CD8-positive, alpha-beta memory T cell (primary cell): ENCODE measurements at regions of chr2 and their contacts with region 1.

Region 1: DNA sequence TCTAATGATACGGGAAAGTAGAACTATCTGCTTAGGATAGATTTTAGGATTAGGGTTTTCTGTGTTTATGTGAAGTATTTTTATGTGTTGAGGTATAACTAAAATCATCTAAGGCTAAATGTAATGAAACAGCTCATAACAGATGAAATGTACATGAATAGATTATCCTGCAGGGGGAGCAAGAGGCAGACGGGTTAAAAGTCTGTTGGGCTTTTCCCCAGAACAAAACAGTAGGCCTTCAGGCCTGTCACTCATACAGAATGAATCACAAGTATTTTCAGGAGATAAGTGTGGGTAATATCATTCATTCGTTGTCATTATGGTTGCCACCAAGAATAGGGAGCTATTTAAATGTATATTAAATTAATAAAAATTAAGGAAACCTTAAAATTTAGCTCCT is 107.9 kb upstream of the IL1R2 start:
- DNase-seq: peak in 2 of 5 donors; percentile 10 to 31
- H3K4me3 ChIP-seq: no peak overlapping the region
- H3K4me3 Mint-ChIP-seq: no peak overlapping the region
- H3K27ac ChIP-seq: no peak overlapping the region
- H3K27ac Mint-ChIP-seq: peak overlapping the region in 1 of 8 donors; percentile 21
- H3K4me1 ChIP-seq: no peaks in the 10 kb centered on the region
- H3K4me1 Mint-ChIP-seq: peaks cover 3 to 10% (median 5%) of the 10 kb centered on the region in 3 donors
- H3K27me3 ChIP-seq: no peaks in the 10 kb centered on the region
- H3K27me3 Mint-ChIP-seq: no peaks in the 10 kb centered on the region

Region 2: DNA sequence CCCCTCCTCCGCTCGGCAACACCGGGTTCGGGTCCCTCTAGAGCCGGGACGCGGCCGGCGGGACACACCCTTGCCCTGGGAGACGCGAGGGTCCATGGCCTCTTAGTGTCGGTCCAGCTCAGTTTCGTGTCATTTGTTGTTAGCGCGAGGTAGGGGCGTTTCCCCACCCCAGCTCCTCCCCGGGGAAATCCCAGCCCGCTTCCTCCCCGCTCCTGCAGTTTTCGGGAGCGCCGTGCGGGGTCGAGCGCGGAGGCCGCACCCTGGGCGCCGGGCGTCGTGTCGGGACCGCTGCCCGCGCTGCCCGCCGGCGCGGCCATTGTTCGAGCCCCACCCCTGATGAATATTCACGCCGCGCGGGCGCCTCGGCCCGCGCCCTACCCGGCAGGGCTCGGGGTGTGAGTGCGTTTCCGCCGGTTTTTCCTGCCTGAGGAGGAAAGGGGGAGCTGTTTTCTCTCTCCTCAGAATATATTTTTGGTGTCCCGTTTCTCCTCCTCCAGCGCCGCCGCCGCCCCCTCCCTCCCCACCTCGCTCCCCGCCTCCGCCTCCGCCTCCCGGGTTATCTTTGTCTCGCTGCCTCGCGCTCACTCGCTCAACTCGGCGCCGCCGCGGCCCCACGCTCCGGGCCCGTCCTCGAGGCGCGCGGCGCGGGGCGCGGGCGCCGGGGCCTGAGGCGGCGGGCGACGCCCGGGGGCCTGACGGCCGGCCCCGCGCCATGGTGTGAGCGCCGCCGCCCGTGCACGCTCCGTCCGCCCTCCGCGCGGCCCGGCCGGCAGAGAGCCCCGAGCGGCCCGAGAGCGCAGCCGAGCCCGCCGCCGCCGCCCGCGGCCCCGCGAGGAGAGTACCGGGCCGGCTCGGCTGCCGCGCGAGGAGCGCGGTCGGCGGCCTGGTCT is 186.5 kb before region 1 on chr2 and contains the start of gene MAP4K4:
- CTCF ChIA-PET with region 1: no interaction called
- POLR2A ChIA-PET with region 1: interaction called, 10 read pairs
- DNase-seq: peak; percentile 62 to 81 (median 64)
- H3K4me3 ChIP-seq: peak within 1 kb of the TSS; percentile 78
- H3K4me3 Mint-ChIP-seq: peak within 1 kb of the TSS; percentile 86 to 94 (median 92)
- H3K27ac ChIP-seq: peak within 1 kb of the TSS; percentile 64
- H3K27ac Mint-ChIP-seq: peak within 1 kb of the TSS; percentile 78 to 94 (median 88)
- H3K4me1 ChIP-seq: peaks cover 18% of the 10 kb centered on the region
- H3K4me1 Mint-ChIP-seq: peaks cover 14 to 17% (median 17%) of the 10 kb centered on the region in 3 donors
- H3K27me3 ChIP-seq: no peaks in the 10 kb centered on the region
- H3K27me3 Mint-ChIP-seq: no peaks in the 10 kb centered on the region
- total RNA-seq, gene MAP4K4: 30.8 to 36.0 TPM

Region 3: DNA sequence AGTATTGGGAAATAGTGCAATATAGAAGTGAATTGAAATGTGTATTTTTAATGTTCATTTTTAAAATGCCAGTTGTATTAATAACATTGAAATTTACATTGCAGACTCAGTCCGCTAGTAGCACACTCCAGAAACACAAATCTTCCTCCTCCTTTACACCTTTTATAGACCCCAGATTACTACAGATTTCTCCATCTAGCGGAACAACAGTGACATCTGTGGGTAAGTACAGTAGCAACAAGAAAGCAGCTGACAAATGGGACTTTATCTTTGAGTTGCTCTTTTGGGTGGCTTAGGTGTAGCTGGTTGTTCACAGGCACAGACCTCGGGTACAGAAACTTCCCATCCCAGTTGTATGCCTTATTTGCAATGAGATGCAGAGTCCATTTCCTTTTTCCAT is 10.3 kb before region 1 on chr2:
- CTCF ChIA-PET with region 1: interaction called, 11 read pairs
- POLR2A ChIA-PET with region 1: no interaction called
- DNase-seq: no peak
- H3K4me3 ChIP-seq: no peak overlapping the region
- H3K4me3 Mint-ChIP-seq: no peak overlapping the region
- H3K27ac ChIP-seq: no peak overlapping the region
- H3K27ac Mint-ChIP-seq: peak overlapping the region in 2 of 8 donors; percentile 48 to 52
- H3K4me1 ChIP-seq: no peaks in the 10 kb centered on the region
- H3K4me1 Mint-ChIP-seq: no peaks in the 10 kb centered on the region
- H3K27me3 ChIP-seq: no peaks in the 10 kb centered on the region
- H3K27me3 Mint-ChIP-seq: peaks cover 0 to 1% of the 10 kb centered on the region in 2 donors

Region 4: GRCh38 chr2:101897301-101897700 is 13.4 kb after region 1 on chr2:
- CTCF ChIA-PET with region 1: interaction called, 12 read pairs
- POLR2A ChIA-PET with region 1: no interaction called
- DNase-seq: no peak
- H3K4me3 ChIP-seq: no peak overlapping the region
- H3K4me3 Mint-ChIP-seq: no peak overlapping the region
- H3K27ac ChIP-seq: no peak overlapping the region
- H3K27ac Mint-ChIP-seq: peak overlapping the region in 1 of 8 donors; percentile 17
- H3K4me1 ChIP-seq: no peaks in the 10 kb centered on the region
- H3K4me1 Mint-ChIP-seq: peaks cover 7 to 13% (median 9%) of the 10 kb centered on the region in 3 donors
- H3K27me3 ChIP-seq: no peaks in the 10 kb centered on the region
- H3K27me3 Mint-ChIP-seq: peaks cover 0 to 5% of the 10 kb centered on the region in 2 donors